Spleen (tissue), 13 donors: ENCODE measurements at regions of chr1 and their contacts with region 1.

Region 1: DNA sequence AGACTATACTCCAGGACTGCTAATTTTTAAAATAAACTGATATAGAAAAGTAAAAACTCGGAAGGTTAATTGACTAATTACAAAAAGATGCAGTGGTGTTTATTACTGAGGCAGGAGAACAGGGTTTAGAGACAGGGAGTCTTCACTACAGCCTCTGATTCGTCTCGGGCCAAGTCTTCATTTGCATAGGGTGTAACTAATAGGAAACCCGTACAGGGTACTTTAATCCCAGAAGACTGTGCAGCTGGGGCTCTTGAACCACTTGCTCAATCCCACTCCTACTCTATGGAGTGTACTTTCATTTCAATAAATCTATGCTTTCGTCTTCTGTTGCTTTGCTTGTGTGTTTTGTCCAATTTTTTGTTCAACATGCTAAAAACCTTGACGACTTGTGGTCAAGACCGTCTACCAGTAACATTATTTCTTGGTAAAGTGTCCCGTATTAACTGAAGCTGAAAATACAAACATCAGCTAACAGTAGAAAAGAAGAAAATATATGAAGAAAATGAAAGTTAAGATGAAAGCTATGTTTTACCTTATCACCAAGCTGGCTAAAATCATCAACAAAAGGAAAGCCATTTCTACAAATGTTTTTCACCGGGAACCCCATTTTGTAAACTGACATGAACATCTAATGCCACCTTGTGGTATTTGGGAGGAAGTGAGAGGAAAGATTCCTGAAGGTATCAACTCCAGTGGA is 8.0 kb downstream of the SDHB start:
- DNase-seq: no peak
- H3K4me3 ChIP-seq: peak overlapping the region in 3 of 8 donors; percentile 11 to 44 (median 18)
- H3K27ac ChIP-seq: peak overlapping the region in 5 of 8 donors; percentile 2 to 58 (median 16)
- H3K4me1 ChIP-seq: peaks cover 0 to 50% (median 19%) of the 10 kb centered on the region in 6 donors
- H3K27me3 ChIP-seq: no peaks in the 10 kb centered on the region
- CTCF ChIP-seq: peak; percentile 52 to 81 (median 76)
- POLR2A ChIP-seq: no peak

Region 2: GRCh38 chr1:16954579-16954978 is 91.2 kb before region 1 on chr1:
- intact Hi-C with region 1: loop called (anchors 5 kb)
- DNase-seq: no peak
- H3K4me3 ChIP-seq: no peak overlapping the region
- H3K27ac ChIP-seq: no peak overlapping the region
- H3K4me1 ChIP-seq: peaks cover 0 to 11% (median 5%) of the 10 kb centered on the region in 6 donors
- H3K27me3 ChIP-seq: no peaks in the 10 kb centered on the region
- CTCF ChIP-seq: no peak
- POLR2A ChIP-seq: no peak

Region 3: DNA sequence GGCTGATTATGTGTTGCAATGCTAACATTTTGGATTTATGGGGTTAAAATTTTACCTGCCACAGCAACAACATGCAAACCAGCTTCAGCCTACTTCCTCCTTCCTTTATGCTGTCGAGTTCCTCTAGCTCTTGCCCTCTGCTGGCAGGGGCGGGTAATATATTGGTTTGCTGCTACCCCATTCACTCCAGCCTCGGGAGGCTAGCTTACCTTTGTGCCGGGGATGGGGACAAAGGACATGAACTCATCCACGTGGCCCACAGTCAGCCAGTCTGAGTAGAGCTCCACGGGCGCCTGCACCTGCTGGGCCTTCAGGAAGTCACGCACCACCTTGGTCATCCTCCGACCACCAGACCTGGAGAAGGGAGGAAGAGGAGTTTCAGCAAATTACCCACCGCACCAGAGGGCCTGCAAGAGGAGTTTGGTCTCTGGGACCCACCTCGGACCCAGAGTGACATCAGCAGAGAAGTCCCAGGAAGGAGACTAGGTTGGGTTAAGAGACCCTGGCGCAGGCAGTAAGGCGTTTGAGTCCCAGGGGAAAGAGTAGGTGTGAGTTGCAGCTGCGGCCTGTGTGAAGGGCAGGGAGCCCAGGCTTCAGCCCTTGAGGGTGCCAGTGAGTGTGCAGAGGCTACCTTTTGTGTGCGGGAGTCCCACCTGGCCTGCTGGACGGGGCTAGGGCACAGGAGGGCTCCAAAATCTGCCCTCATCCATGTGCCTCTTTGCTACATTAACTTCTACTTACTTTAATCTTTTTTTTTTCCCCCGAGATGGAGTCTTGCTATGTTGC is 29.9 kb after region 1 on chr1:
- intact Hi-C with region 1: no loop called
- DNase-seq: peak; percentile 71
- H3K4me3 ChIP-seq: no peak overlapping the region
- H3K27ac ChIP-seq: peak overlapping the region in 2 of 8 donors; percentile 48 to 67
- H3K4me1 ChIP-seq: no peaks in the 10 kb centered on the region
- H3K27me3 ChIP-seq: no peaks in the 10 kb centered on the region
- CTCF ChIP-seq: peak in 9 of 11 experiments; percentile 6 to 66 (median 31)
- POLR2A ChIP-seq: no peak

Region 4: DNA sequence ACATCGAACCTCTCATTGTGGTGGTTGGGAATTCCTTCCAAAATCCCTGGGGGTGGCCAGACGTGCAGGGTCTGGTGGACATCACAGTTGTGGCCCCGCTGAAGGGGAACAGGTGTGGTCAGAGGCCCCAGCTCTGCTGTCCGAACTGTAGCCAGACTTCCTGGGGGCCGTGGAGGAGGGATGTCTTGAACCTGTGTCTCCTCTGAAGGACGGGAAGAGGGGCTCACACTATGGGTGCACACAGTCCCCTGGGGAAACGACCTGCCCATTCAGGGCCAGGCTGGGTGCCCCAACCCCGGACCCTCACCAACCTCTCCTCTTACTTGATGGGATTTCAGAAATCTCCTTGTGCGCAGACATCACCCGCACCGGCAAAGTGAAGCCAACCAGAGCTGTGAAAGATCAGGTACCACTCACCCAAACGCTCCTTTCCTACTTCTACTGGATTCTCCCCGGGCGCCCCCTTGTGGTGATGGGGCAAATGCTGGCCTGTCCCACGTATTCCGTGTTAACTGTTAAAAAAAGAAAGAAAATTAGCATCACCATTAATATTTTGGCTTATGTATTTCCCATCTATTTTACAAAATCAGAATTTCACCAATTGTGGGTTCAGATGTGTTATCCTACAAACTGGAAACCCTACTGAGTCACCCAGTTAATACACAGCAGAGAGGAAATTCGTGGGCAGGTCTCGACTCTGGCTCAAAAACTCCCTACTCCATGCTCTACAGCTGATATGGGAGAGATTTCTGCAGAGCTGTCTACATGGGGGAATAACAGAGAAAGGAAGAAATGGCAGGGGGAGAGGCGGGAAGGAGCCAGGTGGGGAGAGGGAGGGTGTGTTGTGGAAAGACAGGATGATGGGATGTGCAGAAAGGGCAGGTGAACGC is 290.3 kb after region 1 on chr1:
- intact Hi-C with region 1: no loop called
- DNase-seq: peak; percentile 89
- H3K4me3 ChIP-seq: no peak overlapping the region
- H3K27ac ChIP-seq: peak overlapping the region in 1 of 8 donors; percentile 22
- H3K4me1 ChIP-seq: peaks cover 0 to 6% (median 0%) of the 10 kb centered on the region in 6 donors
- H3K27me3 ChIP-seq: peaks cover 0 to 58% (median 0%) of the 10 kb centered on the region in 7 donors
- CTCF ChIP-seq: peak; percentile 27 to 83 (median 67)
- POLR2A ChIP-seq: no peak

Region 5: GRCh38 chr1:17393230-17393629 is 347.4 kb after region 1 on chr1:
- intact Hi-C with region 1: no loop called
- DNase-seq: no peak
- H3K4me3 ChIP-seq: no peak overlapping the region
- H3K27ac ChIP-seq: no peak overlapping the region
- H3K4me1 ChIP-seq: no peaks in the 10 kb centered on the region
- H3K27me3 ChIP-seq: peaks cover 0 to 11% (median 0%) of the 10 kb centered on the region in 7 donors
- CTCF ChIP-seq: no peak
- POLR2A ChIP-seq: no peak